ENCODE measurements at regions of chr6 and their contacts with region 1.

Region 1: GRCh38 chr6:36546920-36547645 is at the start of gene STK38:
- DNase-seq: peak; percentile 95
- ATAC-seq: peak; percentile 85
- H3K4me3 ChIP-seq: peak within 1 kb of the TSS; percentile 70 to 96 (median 88)
- H3K4me3 Mint-ChIP-seq: peak within 1 kb of the TSS; percentile 94
- H3K27ac ChIP-seq: peak within 1 kb of the TSS; percentile 87 to 92
- H3K27ac Mint-ChIP-seq: peak within 1 kb of the TSS; percentile 91
- H3K4me1 ChIP-seq: peaks cover 52 to 60% of the 10 kb centered on the region in 2 donors
- H3K4me1 Mint-ChIP-seq: peaks cover 59% of the 10 kb centered on the region
- H3K27me3 ChIP-seq: no peaks in the 10 kb centered on the region
- H3K27me3 Mint-ChIP-seq: no peaks in the 10 kb centered on the region
- CTCF ChIP-seq: no peak
- total RNA-seq, gene STK38: 67.4 and 71.8 TPM in 2 replicates

Region 2: DNA sequence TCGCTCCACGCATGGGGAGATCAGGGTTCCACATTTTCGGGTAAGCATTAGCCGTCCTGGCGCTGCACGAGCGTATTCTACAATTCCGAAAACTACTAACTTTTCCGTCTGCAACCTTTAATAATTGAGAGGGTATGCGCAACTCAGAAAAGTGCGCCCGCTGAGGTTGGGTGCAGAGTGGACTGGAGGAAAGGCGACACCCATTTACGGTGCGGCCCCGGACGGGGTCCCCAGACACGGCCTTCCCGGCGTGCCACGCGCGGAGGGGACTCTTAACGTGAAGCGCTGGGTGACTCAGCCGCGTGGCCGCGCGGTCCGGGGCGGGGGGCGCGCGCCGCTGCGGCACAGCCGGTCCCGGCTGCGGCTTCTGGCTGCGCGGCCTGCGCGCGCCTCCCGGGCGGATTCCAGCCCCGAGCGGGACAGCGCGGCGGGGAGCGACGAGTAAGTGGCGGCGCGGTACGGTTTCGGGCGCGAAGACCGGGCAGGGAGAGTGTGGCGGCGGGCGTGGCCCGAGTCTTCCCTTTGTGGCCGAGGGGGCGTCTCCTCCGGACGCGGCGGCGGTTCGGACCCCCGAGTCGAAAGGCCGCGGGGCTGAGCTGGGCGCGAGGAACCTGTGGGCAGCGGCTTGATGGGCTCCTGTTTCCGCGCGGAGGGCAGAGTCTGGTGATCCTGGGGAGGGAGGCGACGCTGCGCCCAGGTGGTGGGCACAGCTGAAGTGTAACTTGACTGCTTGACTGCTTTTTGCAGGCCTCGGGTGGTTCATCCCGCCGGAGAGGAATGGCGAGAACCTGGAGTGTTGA is 104.2 kb before region 1 on chr6 and contains the starts of genes KCTD20 and PXT1:
- CTCF ChIA-PET with region 1: no interaction called
- POLR2A ChIA-PET with region 1: no interaction called
- intact Hi-C with region 1: loop called (anchors 1 kb)
- DNase-seq: peak; percentile 88
- ATAC-seq: peak; percentile 87
- H3K4me3 ChIP-seq: peak within 1 kb of the TSS; percentile 80 to 97 (median 89)
- H3K4me3 Mint-ChIP-seq: peak within 1 kb of the TSS; percentile 98
- H3K27ac ChIP-seq: peak within 1 kb of the TSS; percentile 76 to 91
- H3K27ac Mint-ChIP-seq: peak within 1 kb of the TSS; percentile 96
- H3K4me1 ChIP-seq: peaks cover 24 to 26% of the 10 kb centered on the region in 2 donors
- H3K4me1 Mint-ChIP-seq: peaks cover 35% of the 10 kb centered on the region
- H3K27me3 ChIP-seq: no peaks in the 10 kb centered on the region
- H3K27me3 Mint-ChIP-seq: no peaks in the 10 kb centered on the region
- CTCF ChIP-seq: no peak
- total RNA-seq, gene KCTD20: 37.5 and 44.3 TPM in 2 replicates
- total RNA-seq, gene PXT1: 0.27 and 0.52 TPM in 2 replicates

Region 3: GRCh38 chr6:36599791-36600209 is 52.7 kb after region 1 on chr6:
- CTCF ChIA-PET with region 1: interaction called, 4 read pairs
- POLR2A ChIA-PET with region 1: interaction called, 11 read pairs
- intact Hi-C with region 1: loop called (anchors 1 kb)
- DNase-seq: no peak
- ATAC-seq: no peak
- H3K4me3 ChIP-seq: no peak overlapping the region
- H3K4me3 Mint-ChIP-seq: peak overlapping the region; percentile 41
- H3K27ac ChIP-seq: no peak overlapping the region
- H3K27ac Mint-ChIP-seq: peak overlapping the region; percentile 61
- H3K4me1 ChIP-seq: peaks cover 42% of the 10 kb centered on the region in 2 donors
- H3K4me1 Mint-ChIP-seq: peaks cover 70% of the 10 kb centered on the region
- H3K27me3 ChIP-seq: no peaks in the 10 kb centered on the region
- H3K27me3 Mint-ChIP-seq: no peaks in the 10 kb centered on the region
- CTCF ChIP-seq: no peak